ENCODE measurements at regions of chr3 and their contacts with region 1.

Region 1: GRCh38 chr3:129627429-129628168 is 21.1 kb upstream of the PLXND1 start:
- DNase-seq: peak; percentile 90
- H3K4me3 ChIP-seq: peak overlapping the region in 2 of 3 experiments; percentile 11 to 42
- H3K27ac ChIP-seq: peak overlapping the region; percentile 85
- H3K4me1 ChIP-seq: peaks cover 50% of the 10 kb centered on the region
- H3K27me3 ChIP-seq: no peaks in the 10 kb centered on the region
- CTCF ChIP-seq: peak; percentile 86 to 87
- POLR2A ChIP-seq: peak; percentile 51

Region 2: DNA sequence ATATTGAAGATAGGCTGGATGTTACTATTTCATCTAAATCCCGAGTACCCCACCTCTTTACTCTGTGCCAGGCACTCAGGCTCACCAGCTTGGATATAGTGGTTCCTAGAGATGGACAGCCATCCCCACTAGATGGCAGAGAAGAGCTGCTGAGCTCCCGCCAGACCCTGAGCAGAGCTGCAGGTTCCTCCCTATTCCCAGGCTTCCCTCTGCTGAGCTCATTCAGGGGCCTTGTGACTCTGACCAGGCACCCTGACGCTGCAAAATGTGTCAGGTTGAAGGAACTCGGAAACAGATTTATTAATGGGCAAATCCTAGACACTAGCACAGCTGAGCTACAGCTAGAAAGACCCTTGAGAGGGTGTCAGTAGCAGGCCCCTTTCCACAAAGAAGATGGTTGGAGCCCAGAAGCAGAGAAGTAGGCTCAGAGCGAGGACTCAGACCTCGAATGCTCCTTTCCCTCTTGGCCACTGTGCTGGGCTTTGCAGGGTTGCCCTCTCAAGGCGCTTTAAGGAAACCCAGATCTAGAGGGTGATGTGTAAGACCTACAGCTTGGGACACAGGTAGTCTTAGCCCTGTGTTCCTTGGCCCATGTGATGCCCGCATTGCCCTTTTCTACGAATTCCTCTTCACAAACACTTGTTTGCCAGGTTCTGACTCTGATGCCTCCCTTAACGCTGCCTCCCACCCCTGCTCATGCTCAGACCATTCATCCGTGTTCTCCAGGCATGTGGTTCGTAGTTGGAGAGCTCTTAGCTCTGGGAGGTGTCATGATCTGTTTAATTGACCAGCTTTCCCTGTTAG is 137.2 kb before region 1 on chr3:
- CTCF ChIA-PET with region 1: interaction called, 57 read pairs
- POLR2A ChIA-PET with region 1: no interaction called
- dilution Hi-C with region 1: no loop called
- intact Hi-C with region 1: loop called (anchors 1 kb)
- DNase-seq: peak; percentile 90
- H3K4me3 ChIP-seq: no peak overlapping the region
- H3K27ac ChIP-seq: peak overlapping the region; percentile 81
- H3K4me1 ChIP-seq: peaks cover 23% of the 10 kb centered on the region
- H3K27me3 ChIP-seq: no peaks in the 10 kb centered on the region
- CTCF ChIP-seq: peak; percentile 86 to 90
- POLR2A ChIP-seq: no peak

Region 3: DNA sequence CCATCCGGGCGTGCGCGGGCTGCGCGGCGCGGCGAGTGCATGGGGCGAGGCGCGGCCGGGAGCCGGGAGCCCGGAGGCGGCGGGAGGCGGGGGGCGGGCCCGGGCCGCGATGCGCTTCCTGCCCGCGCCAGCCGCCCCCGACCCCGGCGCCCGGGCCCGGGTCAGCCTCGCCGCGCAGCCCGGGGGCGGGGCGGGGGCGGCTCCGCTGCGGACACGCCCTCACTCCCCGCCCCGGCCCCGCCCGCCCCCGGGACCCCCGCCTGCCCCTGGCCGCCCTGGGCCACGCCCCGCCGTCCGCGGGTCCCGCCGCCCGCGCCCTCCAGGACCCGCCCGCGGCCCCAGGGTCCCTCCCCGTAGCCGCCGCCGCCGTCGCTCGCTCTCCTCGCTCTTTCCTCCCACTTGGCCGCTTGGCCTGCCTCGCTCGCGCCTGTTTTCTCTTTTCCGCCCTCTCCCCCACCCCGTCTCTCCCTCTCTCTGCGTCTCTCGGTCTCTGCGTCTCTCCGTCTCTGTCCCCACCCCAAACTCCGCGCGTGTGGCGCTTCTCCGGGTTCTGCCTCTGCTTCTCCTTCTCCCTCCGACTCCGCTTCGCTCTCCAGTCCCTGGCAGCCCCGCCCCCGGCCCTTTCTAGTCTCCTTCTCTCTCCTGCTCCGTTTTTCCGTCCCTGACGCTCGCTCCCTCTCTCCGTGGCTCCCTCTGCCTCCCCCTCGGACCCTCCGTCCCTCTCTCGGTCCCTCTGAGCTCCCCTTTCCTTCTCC is 20.8 kb before region 1 on chr3 and contains the start of gene PLXND1:
- CTCF ChIA-PET with region 1: interaction called, 11 read pairs
- POLR2A ChIA-PET with region 1: interaction called, 5 read pairs
- dilution Hi-C with region 1: no loop called
- intact Hi-C with region 1: loop called (anchors 1 kb)
- DNase-seq: peak; percentile 81
- H3K4me3 ChIP-seq: peak within 1 kb of the TSS; percentile 36 to 87 (median 63)
- H3K27ac ChIP-seq: peak within 1 kb of the TSS; percentile 85
- H3K4me1 ChIP-seq: peaks cover 54% of the 10 kb centered on the region
- H3K27me3 ChIP-seq: no peaks in the 10 kb centered on the region
- CTCF ChIP-seq: no peak
- POLR2A ChIP-seq: peak; percentile 79
- total RNA-seq, gene PLXND1: 834 and 860 TPM in 2 replicates

Region 4: DNA sequence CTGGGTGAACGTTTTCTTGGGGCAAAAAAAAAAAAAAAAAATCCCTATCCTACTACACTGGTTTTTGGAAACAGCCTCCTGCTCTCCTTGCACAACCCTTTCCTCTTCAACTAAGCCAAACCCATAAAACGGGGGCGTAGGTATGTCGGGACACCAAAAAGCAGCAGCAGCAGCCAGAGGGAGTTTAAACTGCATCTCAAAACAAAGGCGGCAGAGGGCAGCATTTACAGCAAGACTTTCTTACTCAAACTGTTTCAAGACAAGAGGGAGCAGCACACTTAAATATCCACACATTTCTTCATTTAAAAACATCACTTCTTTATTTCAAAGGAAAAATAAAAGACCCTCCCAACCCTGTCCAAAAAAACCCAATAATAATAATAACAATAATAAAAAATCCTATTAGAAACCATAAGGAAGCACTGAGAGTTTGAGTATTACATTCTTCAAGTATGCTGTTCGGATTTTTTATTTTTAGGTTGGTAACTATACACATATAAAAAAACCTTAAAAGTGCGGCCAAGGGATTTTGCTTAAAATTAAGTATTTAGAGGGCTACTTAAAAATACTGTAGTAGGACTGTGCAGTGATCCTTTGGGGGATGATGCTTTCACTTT is 22.8 kb after region 1 on chr3:
- CTCF ChIA-PET with region 1: interaction called, 8 read pairs
- POLR2A ChIA-PET with region 1: no interaction called
- dilution Hi-C with region 1: no loop called
- intact Hi-C with region 1: loop called (anchors 1 kb)
- DNase-seq: peak; percentile 80
- H3K4me3 ChIP-seq: no peak overlapping the region
- H3K27ac ChIP-seq: no peak overlapping the region
- H3K4me1 ChIP-seq: peaks cover 24% of the 10 kb centered on the region
- H3K27me3 ChIP-seq: no peaks in the 10 kb centered on the region
- CTCF ChIP-seq: peak; percentile 58
- POLR2A ChIP-seq: no peak

Region 5: GRCh38 chr3:129768728-129769127 is 141.1 kb after region 1 on chr3:
- CTCF ChIA-PET with region 1: no interaction called
- POLR2A ChIA-PET with region 1: no interaction called
- dilution Hi-C with region 1: no loop called
- intact Hi-C with region 1: no loop called
- DNase-seq: no peak
- H3K4me3 ChIP-seq: no peak overlapping the region
- H3K27ac ChIP-seq: no peak overlapping the region
- H3K4me1 ChIP-seq: no peaks in the 10 kb centered on the region
- H3K27me3 ChIP-seq: no peaks in the 10 kb centered on the region
- CTCF ChIP-seq: no peak
- POLR2A ChIP-seq: no peak

Region 6: DNA sequence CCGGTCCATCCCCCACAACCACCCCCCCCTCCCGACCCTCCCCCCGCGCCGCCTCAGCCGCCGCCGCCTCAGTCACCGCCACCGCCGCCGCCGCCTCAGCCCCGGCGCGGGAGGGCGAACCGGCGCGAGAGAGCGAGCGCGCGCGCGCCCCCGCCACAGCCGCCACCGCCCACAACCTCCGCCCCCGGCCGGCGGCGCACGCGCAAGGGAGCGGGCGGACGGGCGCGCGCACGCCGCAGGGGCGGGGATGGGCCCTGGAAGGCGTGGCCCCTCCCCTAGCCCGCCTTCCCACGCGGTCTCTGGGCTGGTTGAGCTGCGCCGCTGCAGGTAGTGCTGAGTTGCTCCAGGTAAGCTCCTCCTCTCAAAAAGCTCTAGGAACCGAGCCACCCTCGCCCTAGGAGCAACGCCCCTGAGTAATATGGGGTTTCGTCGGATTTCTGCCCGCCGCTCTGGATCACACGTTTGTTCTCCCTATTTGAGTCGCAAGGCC is 266.0 kb after region 1 on chr3 and contains the start of gene TMCC1:
- CTCF ChIA-PET with region 1: interaction called, 3 read pairs
- POLR2A ChIA-PET with region 1: no interaction called
- dilution Hi-C with region 1: no loop called
- intact Hi-C with region 1: loop called (anchors 1 kb)
- DNase-seq: peak; percentile 78
- H3K4me3 ChIP-seq: peak within 1 kb of the TSS; percentile 54 to 91 (median 89)
- H3K27ac ChIP-seq: peak within 1 kb of the TSS; percentile 89
- H3K4me1 ChIP-seq: peaks cover 47% of the 10 kb centered on the region
- H3K27me3 ChIP-seq: no peaks in the 10 kb centered on the region
- CTCF ChIP-seq: no peak
- POLR2A ChIP-seq: peak; percentile 54
- total RNA-seq, gene TMCC1: 36.6 and 38.4 TPM in 2 replicates

Region 7: GRCh38 chr3:129942296-129942695 is 314.7 kb after region 1 on chr3:
- CTCF ChIA-PET with region 1: interaction called, 11 read pairs
- POLR2A ChIA-PET with region 1: no interaction called
- dilution Hi-C with region 1: no loop called
- intact Hi-C with region 1: no loop called
- DNase-seq: peak; percentile 75
- H3K4me3 ChIP-seq: no peak overlapping the region
- H3K27ac ChIP-seq: no peak overlapping the region
- H3K4me1 ChIP-seq: no peaks in the 10 kb centered on the region
- H3K27me3 ChIP-seq: peaks cover 4 to 7% of the 10 kb centered on the region in 2 experiments
- CTCF ChIP-seq: peak; percentile 59 to 85
- POLR2A ChIP-seq: no peak